CD8-positive, alpha-beta memory T cell (primary cell): ENCODE measurements at regions of chr10 and their contacts with region 1.

Region 1: GRCh38 chr10:112307358-112308124 is 24.3 kb downstream of the TECTB start:
- DNase-seq: peak in 4 of 5 donors; percentile 7 to 49 (median 10)
- H3K4me3 ChIP-seq: no peak overlapping the region
- H3K4me3 Mint-ChIP-seq: no peak overlapping the region
- H3K27ac ChIP-seq: no peak overlapping the region
- H3K27ac Mint-ChIP-seq: no peak overlapping the region
- H3K4me1 ChIP-seq: no peaks in the 10 kb centered on the region
- H3K4me1 Mint-ChIP-seq: no peaks in the 10 kb centered on the region
- H3K27me3 ChIP-seq: no peaks in the 10 kb centered on the region
- H3K27me3 Mint-ChIP-seq: peaks cover 9 to 33% of the 10 kb centered on the region in 2 donors

Region 2: GRCh38 chr10:112271982-112272381 is 35.6 kb before region 1 on chr10:
- CTCF ChIA-PET with region 1: no interaction called
- POLR2A ChIA-PET with region 1: no interaction called
- DNase-seq: no peak
- H3K4me3 ChIP-seq: no peak overlapping the region
- H3K4me3 Mint-ChIP-seq: no peak overlapping the region
- H3K27ac ChIP-seq: no peak overlapping the region
- H3K27ac Mint-ChIP-seq: no peak overlapping the region
- H3K4me1 ChIP-seq: no peaks in the 10 kb centered on the region
- H3K4me1 Mint-ChIP-seq: no peaks in the 10 kb centered on the region
- H3K27me3 ChIP-seq: peaks cover 4% of the 10 kb centered on the region
- H3K27me3 Mint-ChIP-seq: peaks cover 3 to 6% of the 10 kb centered on the region in 2 donors

Region 3: DNA sequence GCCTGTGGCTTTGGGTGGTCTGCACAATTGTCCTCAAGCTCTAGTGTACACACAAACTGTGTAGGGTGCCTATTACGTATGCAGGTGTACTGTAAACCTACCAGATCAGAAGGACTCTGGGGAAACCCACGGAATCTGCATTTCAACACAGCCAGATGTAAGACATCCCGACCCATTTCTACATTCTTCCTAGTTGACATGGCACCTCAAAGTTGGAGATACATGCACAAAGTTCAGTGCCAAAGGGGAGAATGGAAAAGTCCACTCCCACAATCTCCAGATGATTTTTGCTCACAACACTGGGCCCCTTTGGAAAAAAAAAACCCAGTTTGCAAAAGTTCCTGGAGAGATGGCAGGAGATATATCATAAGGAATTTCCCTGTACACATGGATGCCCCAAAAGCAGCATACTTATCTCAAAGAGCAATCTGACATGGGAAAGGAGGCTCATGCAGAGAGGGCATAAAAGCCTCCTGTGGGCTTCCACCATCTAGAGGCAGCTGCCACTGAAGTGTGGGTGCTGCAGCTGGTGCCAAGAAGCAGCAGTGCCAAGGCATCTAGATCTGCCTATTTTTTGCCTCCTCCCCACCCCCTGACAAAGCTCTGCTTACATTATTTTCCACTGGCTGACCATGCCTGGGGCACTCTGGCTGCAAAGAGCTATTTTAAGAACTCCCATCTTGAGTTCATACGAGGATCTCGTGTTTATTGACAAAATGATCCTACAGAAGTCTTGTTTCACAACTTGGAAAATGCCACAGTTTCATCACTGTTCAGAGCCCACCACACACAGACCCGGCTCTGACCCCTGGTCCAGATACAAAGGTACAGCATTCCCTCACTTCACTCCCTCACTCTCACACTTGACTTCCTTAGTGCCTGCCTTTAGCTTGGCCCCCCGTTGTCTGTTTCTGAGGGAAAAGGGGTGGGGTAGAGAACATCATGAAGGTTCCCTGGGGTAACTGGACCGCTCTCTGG is 11.4 kb before region 1 on chr10:
- CTCF ChIA-PET with region 1: interaction called, 14 read pairs
- POLR2A ChIA-PET with region 1: no interaction called
- DNase-seq: no peak
- H3K4me3 ChIP-seq: no peak overlapping the region
- H3K4me3 Mint-ChIP-seq: no peak overlapping the region
- H3K27ac ChIP-seq: no peak overlapping the region
- H3K27ac Mint-ChIP-seq: peak overlapping the region in 1 of 8 donors; percentile 55
- H3K4me1 ChIP-seq: no peaks in the 10 kb centered on the region
- H3K4me1 Mint-ChIP-seq: no peaks in the 10 kb centered on the region
- H3K27me3 ChIP-seq: no peaks in the 10 kb centered on the region
- H3K27me3 Mint-ChIP-seq: peaks cover 4 to 24% of the 10 kb centered on the region in 2 donors